Activated naive CD4-positive, alpha-beta T cell treated with anti-CD3 and anti-CD28 coated beads, Interleukin-2, amount 10 ng/mL, durations not matched to agents 7 days and 5 days (primary cell): ENCODE measurements at regions of chr10 and their contacts with region 1.

Region 1: GRCh38 chr10:103888113-103888841 is 29.7 kb downstream of the STN1 start:
- DNase-seq: no peak
- H3K4me3 Mint-ChIP-seq: no peak overlapping the region
- H3K27ac Mint-ChIP-seq: no peak overlapping the region
- H3K4me1 Mint-ChIP-seq: peaks cover 29% of the 10 kb centered on the region
- H3K27me3 Mint-ChIP-seq: no peaks in the 10 kb centered on the region

Region 2: DNA sequence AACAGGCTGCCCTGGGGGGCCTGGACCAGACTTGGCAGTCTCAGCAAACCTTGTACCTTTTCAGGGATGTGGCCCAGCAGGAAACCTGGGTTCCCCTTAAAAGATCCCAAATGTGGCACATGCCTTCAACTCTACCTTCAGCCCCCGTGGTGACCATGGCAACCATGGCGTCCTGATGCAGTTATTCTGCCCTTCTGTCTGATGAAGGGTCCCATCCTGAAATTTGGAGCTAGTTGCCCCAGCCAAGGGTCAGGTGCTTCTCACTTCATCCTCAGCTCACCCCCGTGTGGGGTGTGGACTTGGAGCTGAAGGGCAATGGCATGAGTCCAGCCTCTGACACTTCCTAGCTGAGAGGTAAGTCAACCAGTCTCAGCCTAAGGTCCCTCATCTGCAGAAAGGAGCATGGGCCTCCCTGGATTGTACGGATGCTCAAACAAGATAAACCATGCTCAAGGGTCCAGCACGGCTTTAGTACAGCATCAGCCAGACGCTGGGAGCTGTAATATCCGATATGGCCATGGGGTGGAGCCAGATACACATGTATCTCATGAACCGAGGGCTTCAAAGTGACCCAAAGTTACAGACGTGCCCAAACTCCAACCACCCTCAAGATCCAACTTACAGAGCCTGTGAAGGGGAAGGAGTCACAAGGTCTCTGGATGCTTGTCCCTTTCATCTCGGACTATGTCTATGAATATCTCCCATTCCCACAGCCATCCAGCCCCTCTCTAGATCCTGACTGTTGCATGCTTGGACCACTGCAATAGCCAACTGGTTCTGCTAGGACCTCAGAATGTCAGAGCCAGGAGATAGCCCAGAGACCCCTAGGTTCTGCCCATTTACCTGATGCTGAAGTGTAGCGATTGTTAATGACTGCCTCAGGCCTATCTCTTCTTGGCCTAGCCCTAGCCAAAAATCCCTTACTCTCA is 175.4 kb before region 1 on chr10:
- CTCF ChIA-PET with region 1: interaction called, 62 read pairs
- DNase-seq: peak; percentile 90
- H3K4me3 Mint-ChIP-seq: no peak overlapping the region
- H3K27ac Mint-ChIP-seq: no peak overlapping the region
- H3K4me1 Mint-ChIP-seq: no peaks in the 10 kb centered on the region
- H3K27me3 Mint-ChIP-seq: peaks cover 29% of the 10 kb centered on the region

Region 3: GRCh38 chr10:103901299-103901698 is 13.0 kb after region 1 on chr10:
- CTCF ChIA-PET with region 1: interaction called, 11 read pairs
- DNase-seq: no peak
- H3K4me3 Mint-ChIP-seq: no peak overlapping the region
- H3K27ac Mint-ChIP-seq: peak overlapping the region; percentile 8
- H3K4me1 Mint-ChIP-seq: peaks cover 51% of the 10 kb centered on the region
- H3K27me3 Mint-ChIP-seq: no peaks in the 10 kb centered on the region

Region 4: GRCh38 chr10:103918053-103918846 is 30.0 kb after region 1 on chr10 and contains the start of gene STN1:
- CTCF ChIA-PET with region 1: interaction called, 19 read pairs
- DNase-seq: peak; percentile 97
- H3K4me3 Mint-ChIP-seq: peak within 1 kb of the TSS; percentile 84
- H3K27ac Mint-ChIP-seq: peak within 1 kb of the TSS; percentile 90
- H3K4me1 Mint-ChIP-seq: peaks cover 43% of the 10 kb centered on the region
- H3K27me3 Mint-ChIP-seq: no peaks in the 10 kb centered on the region

Region 5: DNA sequence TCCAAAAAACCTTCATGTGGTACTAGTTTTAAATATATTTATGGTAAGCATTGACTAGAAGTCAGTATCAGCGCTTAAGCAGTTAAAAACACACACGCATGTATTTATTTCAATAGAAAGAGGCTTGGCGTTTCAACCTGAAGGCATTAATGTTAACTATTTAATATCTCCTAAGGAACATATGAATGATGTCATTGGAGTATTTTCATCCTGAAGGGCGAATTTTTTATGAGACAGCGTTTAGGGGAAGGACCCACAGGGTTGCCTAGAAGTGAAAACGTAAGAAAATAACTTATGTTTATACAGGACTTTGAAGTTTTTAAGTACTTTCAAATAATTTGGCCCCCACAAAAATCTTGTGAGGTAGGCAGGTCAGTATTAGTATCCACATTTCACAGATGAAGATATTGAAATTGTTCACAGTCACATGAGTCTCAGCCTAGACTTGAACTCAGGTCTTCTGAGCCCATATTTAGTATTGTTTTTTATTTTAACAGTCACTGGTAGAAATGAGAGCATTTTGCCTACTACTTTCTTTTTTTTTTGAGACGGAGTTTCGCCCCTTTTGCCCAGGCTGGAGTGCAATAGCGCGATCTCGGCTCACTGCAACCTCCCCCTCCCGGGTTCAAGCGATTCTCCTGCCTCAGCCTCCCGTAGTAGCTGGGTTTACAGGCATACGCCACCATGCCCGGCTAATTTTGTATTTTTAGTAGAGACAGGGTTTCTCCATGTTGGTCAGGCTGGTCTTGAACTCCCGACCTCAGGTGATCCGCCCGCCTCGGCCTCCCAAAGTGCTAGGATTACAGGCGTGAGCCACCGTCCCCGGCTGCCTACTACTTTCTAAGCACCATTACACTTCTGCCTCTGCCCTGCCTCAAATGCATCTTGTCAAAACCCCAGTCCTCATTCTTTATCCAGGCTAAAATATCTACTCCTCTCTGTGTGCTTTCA is 80.4 kb after region 1 on chr10:
- CTCF ChIA-PET with region 1: interaction called, 11 read pairs
- DNase-seq: no peak
- H3K4me3 Mint-ChIP-seq: peak overlapping the region; percentile 91
- H3K27ac Mint-ChIP-seq: no peak overlapping the region
- H3K4me1 Mint-ChIP-seq: peaks cover 44% of the 10 kb centered on the region
- H3K27me3 Mint-ChIP-seq: no peaks in the 10 kb centered on the region

Region 6: DNA sequence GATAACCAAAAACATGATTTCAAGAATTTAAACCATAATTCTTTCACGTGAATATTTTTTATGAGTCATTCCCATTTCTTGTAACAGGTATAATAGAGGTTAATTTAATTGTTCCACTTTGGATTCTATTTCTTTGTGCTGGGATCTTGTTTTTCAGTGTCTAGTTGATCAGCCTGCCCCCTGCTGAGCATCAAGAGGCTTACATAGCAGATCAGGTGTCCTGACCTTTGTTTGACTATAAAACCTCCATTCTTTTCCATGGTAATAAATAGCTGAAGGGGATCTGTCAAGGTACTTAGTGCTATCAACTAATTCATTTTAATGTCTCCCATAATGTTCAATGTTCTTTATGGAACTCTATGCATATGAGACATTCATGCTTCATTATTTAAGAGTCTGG is 192.5 kb after region 1 on chr10:
- CTCF ChIA-PET with region 1: interaction called, 25 read pairs
- DNase-seq: peak; percentile 31
- H3K4me3 Mint-ChIP-seq: no peak overlapping the region
- H3K27ac Mint-ChIP-seq: no peak overlapping the region
- H3K4me1 Mint-ChIP-seq: no peaks in the 10 kb centered on the region
- H3K27me3 Mint-ChIP-seq: peaks cover 5% of the 10 kb centered on the region

Region 7: GRCh38 chr10:104121520-104122224 is 233.4 kb after region 1 on chr10 and contains the start of gene SFR1:
- CTCF ChIA-PET with region 1: interaction called, 76 read pairs
- DNase-seq: peak; percentile 99
- H3K4me3 Mint-ChIP-seq: peak within 1 kb of the TSS; percentile 82
- H3K27ac Mint-ChIP-seq: peak within 1 kb of the TSS; percentile 98
- H3K4me1 Mint-ChIP-seq: peaks cover 39% of the 10 kb centered on the region
- H3K27me3 Mint-ChIP-seq: peaks cover 15% of the 10 kb centered on the region